Left cardiac atrium (tissue), 4 donors: ENCODE measurements at regions of chr11 and their contacts with region 1.

Region 1: DNA sequence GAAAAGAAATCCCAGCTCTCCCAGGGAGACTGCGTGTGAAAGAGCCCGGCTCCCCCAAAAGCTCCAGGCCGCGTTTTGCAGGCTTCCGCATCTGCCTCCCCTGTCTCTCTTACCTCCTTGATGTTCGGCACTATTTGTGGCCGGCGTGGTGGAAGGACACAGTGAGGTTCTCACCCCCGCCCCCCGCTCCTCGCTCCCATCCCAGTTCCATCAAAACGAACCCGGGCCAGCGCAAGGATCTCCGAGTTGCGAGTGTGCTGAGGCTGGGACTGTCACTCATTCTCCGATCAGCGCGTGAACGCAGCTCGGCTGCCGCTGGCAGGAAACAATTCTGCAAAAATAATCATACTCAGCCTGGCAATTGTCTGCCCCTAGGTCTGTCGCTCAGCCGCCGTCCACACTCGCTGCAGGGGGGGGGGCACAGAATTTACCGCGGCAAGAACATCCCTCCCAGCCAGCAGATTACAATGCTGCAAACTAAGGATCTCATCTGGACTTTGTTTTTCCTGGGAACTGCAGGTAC is at the start of gene NCAM1:
- DNase-seq: peak; percentile 79
- ATAC-seq: peak; percentile 67 to 72
- total RNA-seq, gene NCAM1: 147 to 150 TPM

Region 2: GRCh38 chr11:112588252-112588694 is 372.9 kb before region 1 on chr11:
- intact Hi-C with region 1: loop called in 1 of 2 experiments (anchors 5 kb)
- DNase-seq: peak; percentile 63
- ATAC-seq: peak; percentile 87 to 91

Region 3: DNA sequence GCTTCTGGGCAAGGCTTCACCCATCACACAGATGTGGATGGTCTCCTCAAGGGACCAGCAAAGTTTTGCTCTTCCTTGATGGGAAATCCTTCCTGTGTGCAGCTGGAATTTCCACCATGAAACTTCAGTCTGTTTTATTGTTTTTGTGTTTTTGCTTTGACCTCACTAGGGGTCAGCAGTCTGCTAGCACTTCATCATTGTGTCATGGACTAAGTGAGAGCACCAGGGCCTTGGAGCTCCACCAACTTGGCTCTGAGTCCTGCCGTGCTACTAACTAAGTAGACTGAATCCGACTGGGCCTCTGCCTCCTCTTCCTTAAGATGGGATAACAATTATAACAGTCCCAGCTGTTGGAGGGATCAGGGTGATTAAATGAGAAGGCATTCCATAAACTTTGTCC is 305.8 kb before region 1 on chr11:
- intact Hi-C with region 1: loop called in 1 of 2 experiments (anchors 10 kb)
- DNase-seq: peak; percentile 82
- ATAC-seq: peak; percentile 74 to 82

Region 4: DNA sequence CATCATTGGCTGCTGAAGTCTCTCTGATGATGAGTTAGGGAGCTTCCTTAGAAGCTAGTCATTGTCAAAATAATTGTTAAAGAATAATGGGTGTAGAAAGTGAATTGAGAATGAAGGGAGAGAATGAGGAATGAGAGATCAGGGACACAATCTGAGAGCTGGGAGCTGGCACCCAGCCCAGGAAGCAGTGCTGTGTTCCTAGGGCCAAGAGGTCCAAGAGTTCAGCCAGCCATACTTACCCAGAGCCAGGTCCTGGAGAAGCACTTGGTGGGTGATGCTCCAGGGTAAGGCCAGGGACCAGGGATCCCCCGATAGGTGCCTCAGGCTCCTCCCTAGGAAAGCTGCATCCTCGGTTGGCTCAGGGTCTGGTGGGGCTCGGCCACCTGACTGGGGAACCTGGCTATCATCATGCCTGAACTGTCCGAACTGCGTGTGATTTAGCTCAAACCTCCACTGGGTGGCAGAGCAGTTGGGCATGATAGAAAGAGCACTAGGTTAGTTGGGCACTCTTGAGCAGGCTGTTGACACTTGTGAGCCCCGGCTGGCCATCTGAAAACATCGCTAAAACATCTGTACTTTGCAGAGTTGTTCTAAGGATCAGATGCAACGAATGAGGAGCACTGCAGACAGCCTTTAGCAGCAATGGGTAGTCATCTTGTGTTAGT is 123.9 kb before region 1 on chr11:
- intact Hi-C with region 1: loop called (anchors 2 to 10 kb)
- DNase-seq: no peak
- ATAC-seq: peak; percentile 48 to 64

Region 5: DNA sequence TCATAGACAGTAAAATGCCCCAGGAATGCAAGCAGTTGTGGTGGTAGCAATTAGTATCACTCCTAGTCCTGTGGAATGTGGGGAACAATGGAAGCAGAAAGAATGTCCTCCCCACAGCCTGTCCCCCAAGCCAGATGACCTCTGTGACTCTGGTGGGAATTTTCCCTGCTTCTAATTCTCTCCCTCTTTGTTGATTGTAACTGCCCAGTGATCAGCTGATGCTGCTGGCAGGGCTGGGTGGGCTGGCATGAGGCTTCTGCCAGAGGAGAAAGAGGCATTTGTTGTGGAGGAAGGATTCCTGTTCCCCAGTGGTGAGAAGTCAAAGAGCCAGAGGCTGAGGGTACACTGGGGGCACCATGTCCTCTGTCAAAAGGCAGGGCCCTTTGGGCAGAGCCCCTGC is 116.7 kb before region 1 on chr11:
- intact Hi-C with region 1: loop called in 1 of 2 experiments (anchors 10 kb)
- DNase-seq: no peak
- ATAC-seq: peak; percentile 32 to 63

Region 6: GRCh38 chr11:113023228-113023627 is 62.0 kb after region 1 on chr11:
- intact Hi-C with region 1: no loop called
- DNase-seq: no peak
- ATAC-seq: no peak

Region 7: GRCh38 chr11:113113801-113114706 is 152.8 kb after region 1 on chr11:
- intact Hi-C with region 1: loop called in 1 of 2 experiments (anchors 2 kb)
- DNase-seq: peak; percentile 62
- ATAC-seq: peak; percentile 88 to 94

Region 8: GRCh38 chr11:113162592-113162962 is 201.4 kb after region 1 on chr11:
- intact Hi-C with region 1: no loop called
- DNase-seq: no peak
- ATAC-seq: peak; percentile 70 to 73